ENCODE measurements at regions of chr9 and their contacts with region 1.

Region 1: DNA sequence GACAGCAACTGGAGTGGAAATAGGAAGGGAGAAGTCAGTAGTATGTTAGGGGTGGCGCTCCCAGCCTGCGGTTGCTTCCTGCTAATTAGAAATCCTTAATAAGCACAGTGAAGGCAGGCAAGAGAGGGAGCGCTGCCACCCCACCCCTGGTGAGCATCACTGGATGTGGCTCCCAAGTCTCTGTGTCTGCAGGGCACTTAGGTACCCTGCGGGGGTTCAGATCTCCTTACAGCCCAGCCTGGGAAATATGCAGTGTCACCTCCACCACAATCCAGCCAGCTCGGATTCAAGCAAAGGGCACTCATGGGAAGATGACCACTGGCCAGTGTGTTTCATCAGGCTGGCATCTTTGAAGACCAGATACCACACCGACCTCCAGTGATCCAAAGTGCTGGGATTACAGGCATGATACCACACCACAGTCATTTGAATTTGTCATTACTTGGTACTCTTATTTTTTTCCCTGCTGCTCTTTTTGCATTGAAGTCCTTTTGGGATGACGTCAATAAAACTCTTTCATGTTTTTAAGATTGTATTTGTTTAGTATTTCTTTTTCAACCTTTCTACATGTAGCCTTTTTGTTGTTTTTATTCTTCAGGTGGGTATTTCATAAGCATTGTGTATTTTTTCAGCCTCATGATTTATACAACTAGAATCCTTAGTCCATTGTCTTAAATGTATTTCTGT is 90.1 kb downstream of the ANKRD18B start:
- DNase-seq: no peak
- ATAC-seq: no peak
- H3K4me3 ChIP-seq: no peak overlapping the region
- H3K27ac ChIP-seq: no peak overlapping the region
- H3K4me1 ChIP-seq: peaks cover 0 to 7% of the 10 kb centered on the region in 2 experiments; a peak in 3 of 5 replicates
- H3K27me3 ChIP-seq: no peaks in the 10 kb centered on the region
- CTCF ChIP-seq: no peak
- EP300 ChIP-seq: no peak
- POLR2A ChIP-seq: no peak
- RAD21 ChIP-seq: no peak

Region 2: GRCh38 chr9:33742519-33742918 is 128.4 kb after region 1 on chr9:
- CTCF ChIA-PET with region 1: no interaction called
- POLR2A ChIA-PET with region 1: no interaction called
- in situ Hi-C with region 1: no loop called
- intact Hi-C with region 1: no loop called
- DNase-seq: peak in 2 of 4 experiments; percentile 9 to 37
- ATAC-seq: peak; percentile 82
- H3K4me3 ChIP-seq: no peak overlapping the region
- H3K27ac ChIP-seq: no peak overlapping the region
- H3K4me1 ChIP-seq: no peaks in the 10 kb centered on the region; a peak in 1 of 5 replicates
- H3K27me3 ChIP-seq: no peaks in the 10 kb centered on the region
- CTCF ChIP-seq: peak; percentile 27 to 74 (median 46); a peak in 5 of 6 replicates
- EP300 ChIP-seq: no peak
- POLR2A ChIP-seq: no peak
- RAD21 ChIP-seq: peak in 1 of 2 experiments; percentile 49; a peak in 2 of 4 replicates

Region 3: GRCh38 chr9:33799928-33800704 is 186.0 kb after region 1 on chr9:
- CTCF ChIA-PET with region 1: no interaction called
- POLR2A ChIA-PET with region 1: no interaction called
- in situ Hi-C with region 1: loop called (anchors 5 kb)
- intact Hi-C with region 1: no loop called
- DNase-seq: no peak
- ATAC-seq: no peak
- H3K4me3 ChIP-seq: no peak overlapping the region
- H3K27ac ChIP-seq: no peak overlapping the region
- H3K4me1 ChIP-seq: no peaks in the 10 kb centered on the region; a peak in 1 of 5 replicates
- H3K27me3 ChIP-seq: peaks cover 5 to 33% of the 10 kb centered on the region in 2 experiments; a peak in 4 of 5 replicates
- CTCF ChIP-seq: no peak
- EP300 ChIP-seq: no peak
- POLR2A ChIP-seq: no peak
- RAD21 ChIP-seq: no peak

Measured in K562 (cell line).